Head of caudate nucleus (tissue), 42 donors: ENCODE measurements at regions of chr7 and their contacts with region 1.

Region 1: GRCh38 chr7:29343399-29343798 is 148.8 kb downstream of the CHN2 start:
- DNase-seq: no peak

Region 2: DNA sequence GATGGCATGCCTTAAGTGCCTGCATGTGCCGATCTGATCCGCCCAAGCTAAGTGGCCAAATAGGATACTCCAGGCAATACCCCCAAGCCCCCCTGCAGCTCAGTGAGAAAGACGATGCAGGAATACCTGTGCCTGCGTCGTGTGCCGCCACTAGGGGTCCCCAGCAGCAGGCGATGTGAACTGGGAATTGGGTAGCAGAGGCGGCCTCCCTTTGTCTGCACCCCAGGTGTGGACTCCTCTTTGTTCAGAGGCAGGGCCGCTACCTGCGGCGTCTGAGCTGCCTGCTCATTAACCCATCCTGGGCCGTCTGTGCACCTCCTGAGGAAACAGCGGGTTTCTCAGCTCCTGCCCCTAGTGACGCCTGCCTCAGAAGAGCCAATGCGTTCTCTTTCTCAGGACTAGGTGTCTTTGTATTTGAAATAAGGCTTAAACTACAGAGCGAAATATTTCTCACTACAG is 153.6 kb before region 1 on chr7:
- intact Hi-C with region 1: loop called (anchors 5 kb)
- DNase-seq: peak; percentile 66 to 91 (median 81)